Activated T-helper 2 cell treated with anti-CD3 and anti-CD28 coated beads, Interferon-gamma antibody, Interleukin-2, Interleukin-4, amounts not matched to agents 10 μg/mL and 5 μg/mL and 100 μg/mL, durations not matched to agents 14 hours and 24 hours and 36 hours (primary cell): ENCODE measurements at regions of chr17 and their contacts with region 1.

Region 1: GRCh38 chr17:4948931-4949320 is 596 bp upstream of the PFN1 start:
- DNase-seq: no peak
- H3K4me3 Mint-ChIP-seq: peak overlapping the region; percentile 100
- H3K27ac Mint-ChIP-seq: peak overlapping the region; percentile 100
- H3K4me1 Mint-ChIP-seq: peaks cover 37% of the 10 kb centered on the region
- H3K27me3 Mint-ChIP-seq: no peaks in the 10 kb centered on the region

Region 2: GRCh38 chr17:4908301-4908700 is 40.6 kb before region 1 on chr17:
- intact Hi-C with region 1: loop called (anchors 2 kb)
- DNase-seq: no peak
- H3K4me3 Mint-ChIP-seq: no peak overlapping the region
- H3K27ac Mint-ChIP-seq: no peak overlapping the region
- H3K4me1 Mint-ChIP-seq: peaks cover 4% of the 10 kb centered on the region
- H3K27me3 Mint-ChIP-seq: peaks cover 3% of the 10 kb centered on the region

Region 3: GRCh38 chr17:4934173-4934979 is 14.6 kb before region 1 on chr17:
- intact Hi-C with region 1: no loop called
- DNase-seq: no peak
- H3K4me3 Mint-ChIP-seq: no peak overlapping the region
- H3K27ac Mint-ChIP-seq: peak overlapping the region; percentile 40
- H3K4me1 Mint-ChIP-seq: peaks cover 26% of the 10 kb centered on the region
- H3K27me3 Mint-ChIP-seq: no peaks in the 10 kb centered on the region

Region 4: DNA sequence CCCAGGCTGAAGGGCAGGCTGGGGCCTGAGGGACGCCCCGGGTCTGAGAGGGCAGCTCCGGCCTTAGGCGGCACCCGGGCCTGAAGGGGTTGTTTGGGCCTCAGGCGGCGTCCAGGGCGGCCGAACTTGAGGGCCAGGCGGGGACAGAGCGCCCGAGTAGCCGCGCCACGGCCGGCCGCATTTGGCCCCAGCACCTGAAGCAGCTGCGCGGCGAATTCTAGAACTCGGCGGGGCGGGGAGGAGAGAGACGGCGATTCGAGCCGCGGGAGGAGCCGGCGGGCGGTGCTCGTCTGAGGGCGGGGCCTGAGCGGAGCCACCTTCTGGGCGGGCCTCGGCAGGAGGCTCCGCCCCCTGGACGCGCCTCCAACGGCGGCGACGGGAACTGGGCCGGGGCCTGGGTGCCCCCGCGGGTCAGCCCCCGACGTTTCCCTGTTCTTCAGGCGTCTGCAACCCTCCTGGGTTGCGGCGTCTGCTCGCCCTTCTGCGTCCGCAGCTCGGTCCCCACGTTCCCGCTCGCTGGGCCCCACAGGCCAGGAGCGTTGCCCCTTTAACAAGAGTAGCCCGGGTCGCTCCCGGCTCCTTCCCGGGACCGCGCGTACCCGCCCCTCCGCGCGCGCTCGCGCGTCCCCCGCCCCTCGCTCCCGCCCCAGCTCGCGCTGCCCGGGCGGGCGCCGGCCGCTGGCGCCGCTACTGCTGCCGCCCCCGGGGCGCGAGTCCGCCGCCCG is 48.5 kb after region 1 on chr17 and contains the starts of genes INCA1 and KIF1C:
- intact Hi-C with region 1: no loop called
- DNase-seq: peak; percentile 89
- H3K4me3 Mint-ChIP-seq: peak within 1 kb of the TSS; percentile 86
- H3K27ac Mint-ChIP-seq: peak within 1 kb of the TSS; percentile 62
- H3K4me1 Mint-ChIP-seq: peaks cover 12% of the 10 kb centered on the region
- H3K27me3 Mint-ChIP-seq: no peaks in the 10 kb centered on the region
- total RNA-seq, gene INCA1: 0.43 and 0.53 TPM in 2 replicates
- total RNA-seq, gene KIF1C: 51.0 and 51.4 TPM in 2 replicates